PC-3 (cell line): ENCODE measurements at regions of chr2 and their contacts with region 1.

Region 1: DNA sequence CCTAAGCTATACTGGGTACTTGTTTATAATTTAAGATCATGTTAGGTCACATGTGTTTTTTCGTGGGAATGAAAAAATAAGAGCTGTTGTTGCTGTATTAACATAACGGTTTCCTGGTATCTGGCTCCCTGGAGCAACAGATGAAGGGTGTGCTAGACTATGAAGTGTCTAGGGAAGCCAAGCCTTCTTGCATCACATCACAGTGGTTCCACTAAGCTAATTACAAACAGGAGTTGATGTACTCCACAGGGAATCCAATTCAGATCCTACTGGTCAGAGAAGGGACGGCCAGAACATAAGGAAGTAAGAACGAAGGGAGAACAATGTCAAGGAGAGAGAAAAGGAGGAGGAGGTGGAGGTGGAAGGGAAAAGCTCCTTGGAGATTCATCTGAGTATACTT is 193.0 kb upstream of the CYP26B1 start:
- DNase-seq: no peak
- ATAC-seq: no peak
- H3K4me3 ChIP-seq: no peak overlapping the region
- H3K27ac ChIP-seq: no peak overlapping the region
- H3K4me1 ChIP-seq: no peaks in the 10 kb centered on the region
- H3K27me3 ChIP-seq: no peaks in the 10 kb centered on the region
- CTCF ChIP-seq: no peak

Region 2: GRCh38 chr2:71721362-71721665 is 619.4 kb before region 1 on chr2:
- CTCF ChIA-PET with region 1: no interaction called
- POLR2A ChIA-PET with region 1: no interaction called
- intact Hi-C with region 1: no loop called
- DNase-seq: no peak
- ATAC-seq: no peak
- H3K4me3 ChIP-seq: no peak overlapping the region
- H3K27ac ChIP-seq: no peak overlapping the region
- H3K4me1 ChIP-seq: peaks cover 15% of the 10 kb centered on the region
- H3K27me3 ChIP-seq: no peaks in the 10 kb centered on the region
- CTCF ChIP-seq: no peak

Region 3: GRCh38 chr2:72150157-72150865 is 190.4 kb before region 1 on chr2:
- CTCF ChIA-PET with region 1: no interaction called
- POLR2A ChIA-PET with region 1: no interaction called
- intact Hi-C with region 1: no loop called
- DNase-seq: peak; percentile 93
- ATAC-seq: peak; percentile 80
- H3K4me3 ChIP-seq: peak overlapping the region; percentile 74
- H3K27ac ChIP-seq: no peak overlapping the region
- H3K4me1 ChIP-seq: peaks cover 24% of the 10 kb centered on the region
- H3K27me3 ChIP-seq: peaks cover 29% of the 10 kb centered on the region
- CTCF ChIP-seq: peak; percentile 81

Region 4: DNA sequence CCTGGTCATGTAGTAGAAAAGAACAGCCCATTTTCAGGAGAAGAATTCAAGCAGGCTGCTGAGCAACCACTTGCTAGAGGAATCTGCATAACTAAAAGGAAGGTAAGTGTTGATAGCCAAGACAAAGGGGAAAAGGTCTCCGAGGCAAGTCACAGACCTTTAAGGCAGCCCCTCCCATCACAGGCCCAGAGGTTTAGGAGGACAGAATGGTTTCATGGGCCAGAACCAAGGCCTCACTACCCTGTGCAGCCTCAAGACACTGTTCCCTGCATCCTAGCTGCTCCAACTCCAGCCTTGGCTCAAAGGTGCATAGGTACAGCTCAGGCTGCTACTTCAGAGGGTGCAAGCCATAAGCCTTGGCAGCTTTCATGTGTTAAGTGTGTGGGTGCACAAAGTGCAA is 45.6 kb after region 1 on chr2:
- CTCF ChIA-PET with region 1: no interaction called
- POLR2A ChIA-PET with region 1: no interaction called
- intact Hi-C with region 1: no loop called
- DNase-seq: no peak
- ATAC-seq: no peak
- H3K4me3 ChIP-seq: no peak overlapping the region
- H3K27ac ChIP-seq: no peak overlapping the region
- H3K4me1 ChIP-seq: no peaks in the 10 kb centered on the region
- H3K27me3 ChIP-seq: no peaks in the 10 kb centered on the region
- CTCF ChIP-seq: no peak

Region 5: GRCh38 chr2:72415241-72415661 is 74.6 kb after region 1 on chr2:
- CTCF ChIA-PET with region 1: no interaction called
- POLR2A ChIA-PET with region 1: interaction called, 10 read pairs
- intact Hi-C with region 1: no loop called
- DNase-seq: peak; percentile 67
- ATAC-seq: peak; percentile 79
- H3K4me3 ChIP-seq: no peak overlapping the region
- H3K27ac ChIP-seq: no peak overlapping the region
- H3K4me1 ChIP-seq: peaks cover 20% of the 10 kb centered on the region
- H3K27me3 ChIP-seq: no peaks in the 10 kb centered on the region
- CTCF ChIP-seq: no peak